ENCODE measurements at regions of chr4 and their contacts with region 1.

Region 1: DNA sequence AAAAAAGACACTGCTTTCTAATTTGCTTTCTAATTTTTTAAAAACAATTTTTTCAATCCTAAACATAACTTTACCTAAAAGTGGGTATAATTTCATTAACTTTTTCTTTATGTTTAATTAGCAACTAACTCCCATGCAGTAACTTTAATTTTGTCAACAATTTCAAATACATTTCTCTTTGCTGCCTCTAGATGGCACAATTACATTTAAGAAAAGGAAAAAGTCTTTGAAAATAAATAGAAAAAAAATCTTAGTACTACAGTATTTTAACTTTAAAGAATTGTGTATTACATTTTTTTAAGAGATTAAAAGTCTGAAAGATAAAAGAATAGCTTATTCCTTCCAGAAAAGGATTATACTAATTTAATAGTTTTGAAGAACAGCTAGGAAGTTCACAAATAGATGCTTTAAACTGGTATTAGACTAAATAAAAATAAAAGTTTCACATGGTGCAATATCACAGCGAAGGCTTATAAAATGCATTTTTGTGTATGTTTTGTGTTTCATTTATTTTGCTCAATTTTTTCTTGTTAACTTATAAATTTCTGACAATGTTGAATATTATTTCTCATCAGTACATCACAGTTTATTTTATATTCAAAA is 105.1 kb downstream of the ADGRA3 start:
- DNase-seq: no peak
- ATAC-seq: no peak
- H3K4me3 ChIP-seq: no peak overlapping the region
- H3K4me1 ChIP-seq: no peaks in the 10 kb centered on the region
- CTCF ChIP-seq: peak; percentile 31

Region 2: DNA sequence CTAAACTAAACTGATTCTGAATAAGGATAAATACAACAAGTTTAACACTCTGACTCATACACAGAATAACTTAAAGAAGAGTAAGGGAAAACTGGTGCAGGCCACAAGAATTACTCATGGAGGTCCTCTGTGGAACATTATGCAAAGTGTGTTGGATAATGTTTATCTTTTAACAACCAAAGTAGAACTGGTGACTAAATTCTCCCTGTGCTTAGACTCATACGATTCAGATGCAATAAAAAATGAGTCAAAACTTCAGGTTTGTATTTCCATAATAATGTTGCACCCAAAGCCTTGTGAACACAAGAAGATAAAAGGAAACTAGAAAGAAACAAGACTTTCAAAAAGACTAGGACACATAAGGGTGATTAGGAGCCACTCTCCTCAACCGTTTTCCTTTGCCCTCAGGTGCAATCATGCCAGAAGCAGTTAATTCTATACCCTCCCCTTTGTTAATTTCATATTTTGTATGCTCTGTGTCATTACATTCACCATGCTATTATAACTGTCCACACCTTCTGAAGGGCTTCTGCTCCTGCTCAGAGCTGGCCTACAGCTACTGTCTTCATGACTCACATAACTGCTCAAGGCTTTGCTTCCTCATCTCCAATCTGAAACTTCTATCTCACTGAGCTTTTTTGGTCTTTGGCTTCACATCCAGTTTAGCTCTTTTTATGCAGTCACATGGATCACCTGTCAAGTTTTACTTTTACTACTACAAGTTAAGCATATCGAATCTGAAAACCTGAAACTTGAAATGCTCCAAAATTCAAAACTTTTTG is 522.4 kb before region 1 on chr4:
- intact Hi-C with region 1: no loop called
- DNase-seq: no peak
- ATAC-seq: no peak
- H3K4me3 ChIP-seq: no peak overlapping the region
- H3K4me1 ChIP-seq: no peaks in the 10 kb centered on the region
- CTCF ChIP-seq: no peak

Region 3: GRCh38 chr4:22029807-22030206 is 380.9 kb before region 1 on chr4:
- intact Hi-C with region 1: no loop called
- DNase-seq: peak in 1 of 3 donors; percentile 5
- ATAC-seq: no peak
- H3K4me3 ChIP-seq: no peak overlapping the region
- H3K4me1 ChIP-seq: no peaks in the 10 kb centered on the region
- CTCF ChIP-seq: no peak

Region 4: GRCh38 chr4:22607382-22607781 is 196.6 kb after region 1 on chr4:
- intact Hi-C with region 1: loop called in 1 of 2 experiments (anchors 5 kb)
- DNase-seq: peak; percentile 56 to 75 (median 64)
- ATAC-seq: peak; percentile 99
- H3K4me3 ChIP-seq: no peak overlapping the region
- H3K4me1 ChIP-seq: no peaks in the 10 kb centered on the region
- CTCF ChIP-seq: peak; percentile 19

Region 5: GRCh38 chr4:22692736-22693135 is 282.0 kb after region 1 on chr4 and contains the start of gene GBA3:
- intact Hi-C with region 1: loop called (anchors 5 to 10 kb)
- DNase-seq: peak in 2 of 3 donors; percentile 38 to 39
- ATAC-seq: peak; percentile 84
- H3K4me3 ChIP-seq: no peak within 1 kb of the TSS
- H3K4me1 ChIP-seq: peaks cover 7% of the 10 kb centered on the region
- CTCF ChIP-seq: no peak
- total RNA-seq, gene GBA3: 4.0 to 9.0 (median 8.1) TPM

Measured in mucosa of descending colon (tissue), 3 donors.